ENCODE measurements at regions of chr13 and their contacts with region 1.

Region 1: DNA sequence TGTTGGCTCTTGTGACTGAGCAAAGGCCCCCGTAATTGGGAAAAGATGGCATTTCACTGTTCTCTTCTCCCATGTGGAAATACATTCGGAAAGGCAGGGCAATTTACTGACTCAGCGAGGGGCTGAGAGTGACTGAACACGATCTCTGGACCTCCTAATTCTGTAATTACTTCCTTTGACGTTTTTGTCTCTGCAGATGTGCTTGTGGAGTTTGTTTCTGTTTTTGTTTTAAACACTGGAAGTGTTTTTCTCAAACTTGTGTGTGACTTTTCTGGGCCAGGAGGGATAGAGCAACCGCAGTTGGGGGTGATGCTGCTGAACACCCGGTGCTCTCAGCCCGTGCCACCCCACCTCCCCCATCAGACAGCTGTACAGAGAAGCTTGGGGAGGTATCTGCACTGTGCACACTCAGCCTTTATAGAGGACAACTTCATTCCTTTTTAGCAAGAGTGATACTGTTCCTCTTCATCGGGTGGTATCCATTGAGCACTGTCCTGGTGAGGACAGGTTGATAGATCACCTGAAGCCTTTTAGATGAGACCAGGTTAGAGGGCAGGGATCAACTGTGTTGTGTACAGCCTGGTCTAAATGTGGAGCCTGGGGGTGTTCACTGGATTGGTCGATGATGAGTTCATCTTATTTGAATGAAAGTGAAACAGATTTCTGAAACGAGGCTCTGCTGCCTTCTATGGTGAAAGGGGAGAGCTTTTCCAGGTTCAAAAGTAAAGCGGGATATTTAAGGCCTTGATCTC is 117.4 kb downstream of the ESD start:
- DNase-seq: no peak
- H3K4me3 ChIP-seq: no peak overlapping the region
- H3K4me3 Mint-ChIP-seq: no peak overlapping the region
- H3K27ac Mint-ChIP-seq: no peak overlapping the region
- H3K4me1 ChIP-seq: peaks cover 59% of the 10 kb centered on the region
- H3K4me1 Mint-ChIP-seq: peaks cover 24% of the 10 kb centered on the region
- H3K27me3 ChIP-seq: no peaks in the 10 kb centered on the region
- H3K27me3 Mint-ChIP-seq: no peaks in the 10 kb centered on the region
- CTCF ChIP-seq: no peak

Region 2: GRCh38 chr13:46463719-46464118 is 215.8 kb before region 1 on chr13:
- CTCF ChIA-PET with region 1: no interaction called
- POLR2A ChIA-PET with region 1: no interaction called
- intact Hi-C with region 1: no loop called
- DNase-seq: no peak
- H3K4me3 ChIP-seq: no peak overlapping the region
- H3K4me3 Mint-ChIP-seq: no peak overlapping the region
- H3K27ac Mint-ChIP-seq: no peak overlapping the region
- H3K4me1 ChIP-seq: peaks cover 10% of the 10 kb centered on the region
- H3K4me1 Mint-ChIP-seq: peaks cover 6% of the 10 kb centered on the region
- H3K27me3 ChIP-seq: no peaks in the 10 kb centered on the region
- H3K27me3 Mint-ChIP-seq: no peaks in the 10 kb centered on the region
- CTCF ChIP-seq: no peak

Region 3: GRCh38 chr13:46639033-46639981 is 40.2 kb before region 1 on chr13:
- CTCF ChIA-PET with region 1: no interaction called
- POLR2A ChIA-PET with region 1: interaction called, 14 read pairs
- intact Hi-C with region 1: loop called (anchors 5 kb)
- DNase-seq: no peak
- H3K4me3 ChIP-seq: no peak overlapping the region
- H3K4me3 Mint-ChIP-seq: no peak overlapping the region
- H3K27ac Mint-ChIP-seq: no peak overlapping the region
- H3K4me1 ChIP-seq: peaks cover 59% of the 10 kb centered on the region
- H3K4me1 Mint-ChIP-seq: peaks cover 61% of the 10 kb centered on the region
- H3K27me3 ChIP-seq: no peaks in the 10 kb centered on the region
- H3K27me3 Mint-ChIP-seq: no peaks in the 10 kb centered on the region
- CTCF ChIP-seq: no peak

Region 4: DNA sequence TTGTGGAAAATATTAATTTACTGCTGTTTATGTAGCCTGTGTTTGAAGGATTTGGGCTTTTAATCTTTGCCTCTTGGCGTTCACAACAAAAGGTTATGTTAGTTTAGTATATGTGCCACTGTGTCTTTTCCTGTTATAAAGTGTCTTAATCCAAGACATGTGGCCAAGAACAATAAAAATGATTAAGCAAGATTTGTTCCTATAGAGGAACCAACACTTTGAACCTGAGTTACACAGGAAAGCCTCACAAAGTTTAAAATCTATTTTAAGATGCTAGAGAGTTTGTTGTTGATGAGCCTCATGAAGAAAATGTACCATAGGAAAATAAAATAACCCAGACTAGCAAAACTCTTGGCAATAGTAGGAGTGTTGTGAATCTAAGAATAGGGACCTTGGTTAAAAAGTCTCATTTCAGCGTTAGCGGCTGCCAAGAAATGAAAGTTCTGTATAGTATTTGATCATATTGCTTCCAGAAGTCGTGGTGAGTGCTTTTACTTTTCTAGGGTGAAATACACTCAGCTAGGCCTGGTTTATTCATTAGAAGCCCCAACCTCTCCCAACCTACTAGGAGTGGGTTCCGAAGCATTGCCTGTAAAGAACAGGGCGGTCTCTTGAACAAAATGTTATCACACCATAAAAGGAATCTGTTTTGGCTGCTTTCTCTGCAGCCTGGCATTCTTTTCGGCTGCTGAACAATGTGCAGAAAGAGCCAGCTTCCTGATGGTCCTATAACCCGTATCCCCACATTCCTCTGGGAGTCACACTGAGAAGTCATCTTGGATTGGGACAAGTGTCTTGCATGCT is 24.0 kb before region 1 on chr13:
- CTCF ChIA-PET with region 1: interaction called, 4 read pairs
- POLR2A ChIA-PET with region 1: no interaction called
- intact Hi-C with region 1: loop called (anchors 1 kb)
- DNase-seq: peak; percentile 70 to 78
- H3K4me3 ChIP-seq: no peak overlapping the region
- H3K4me3 Mint-ChIP-seq: no peak overlapping the region
- H3K27ac Mint-ChIP-seq: peak overlapping the region; percentile 65
- H3K4me1 ChIP-seq: peaks cover 58% of the 10 kb centered on the region
- H3K4me1 Mint-ChIP-seq: peaks cover 35% of the 10 kb centered on the region
- H3K27me3 ChIP-seq: no peaks in the 10 kb centered on the region
- H3K27me3 Mint-ChIP-seq: no peaks in the 10 kb centered on the region
- CTCF ChIP-seq: no peak

Region 5: GRCh38 chr13:46668302-46668720 is 11.2 kb before region 1 on chr13:
- CTCF ChIA-PET with region 1: no interaction called
- POLR2A ChIA-PET with region 1: interaction called, 4 read pairs
- intact Hi-C with region 1: loop called (anchors 1 kb)
- DNase-seq: no peak
- H3K4me3 ChIP-seq: no peak overlapping the region
- H3K4me3 Mint-ChIP-seq: no peak overlapping the region
- H3K27ac Mint-ChIP-seq: no peak overlapping the region
- H3K4me1 ChIP-seq: peaks cover 41% of the 10 kb centered on the region
- H3K4me1 Mint-ChIP-seq: peaks cover 37% of the 10 kb centered on the region
- H3K27me3 ChIP-seq: no peaks in the 10 kb centered on the region
- H3K27me3 Mint-ChIP-seq: no peaks in the 10 kb centered on the region
- CTCF ChIP-seq: no peak

Region 6: GRCh38 chr13:47046706-47047105 is 367.2 kb after region 1 on chr13:
- CTCF ChIA-PET with region 1: no interaction called
- POLR2A ChIA-PET with region 1: no interaction called
- intact Hi-C with region 1: no loop called
- DNase-seq: no peak
- H3K4me3 ChIP-seq: no peak overlapping the region
- H3K4me3 Mint-ChIP-seq: no peak overlapping the region
- H3K27ac Mint-ChIP-seq: no peak overlapping the region
- H3K4me1 ChIP-seq: no peaks in the 10 kb centered on the region
- H3K4me1 Mint-ChIP-seq: no peaks in the 10 kb centered on the region
- H3K27me3 ChIP-seq: no peaks in the 10 kb centered on the region
- H3K27me3 Mint-ChIP-seq: peaks cover 18% of the 10 kb centered on the region
- CTCF ChIP-seq: no peak

Measured in Caco-2 (cell line).